Right ventricle myocardium inferior (tissue), 1 donor: ENCODE measurements at regions of chr17 and their contacts with region 1.

Region 1: GRCh38 chr17:39668199-39668966 is at the start of gene PNMT:
- DNase-seq: peak; percentile 92
- ATAC-seq: no peak
- total RNA-seq, gene PNMT: 5.1 TPM

Region 2: DNA sequence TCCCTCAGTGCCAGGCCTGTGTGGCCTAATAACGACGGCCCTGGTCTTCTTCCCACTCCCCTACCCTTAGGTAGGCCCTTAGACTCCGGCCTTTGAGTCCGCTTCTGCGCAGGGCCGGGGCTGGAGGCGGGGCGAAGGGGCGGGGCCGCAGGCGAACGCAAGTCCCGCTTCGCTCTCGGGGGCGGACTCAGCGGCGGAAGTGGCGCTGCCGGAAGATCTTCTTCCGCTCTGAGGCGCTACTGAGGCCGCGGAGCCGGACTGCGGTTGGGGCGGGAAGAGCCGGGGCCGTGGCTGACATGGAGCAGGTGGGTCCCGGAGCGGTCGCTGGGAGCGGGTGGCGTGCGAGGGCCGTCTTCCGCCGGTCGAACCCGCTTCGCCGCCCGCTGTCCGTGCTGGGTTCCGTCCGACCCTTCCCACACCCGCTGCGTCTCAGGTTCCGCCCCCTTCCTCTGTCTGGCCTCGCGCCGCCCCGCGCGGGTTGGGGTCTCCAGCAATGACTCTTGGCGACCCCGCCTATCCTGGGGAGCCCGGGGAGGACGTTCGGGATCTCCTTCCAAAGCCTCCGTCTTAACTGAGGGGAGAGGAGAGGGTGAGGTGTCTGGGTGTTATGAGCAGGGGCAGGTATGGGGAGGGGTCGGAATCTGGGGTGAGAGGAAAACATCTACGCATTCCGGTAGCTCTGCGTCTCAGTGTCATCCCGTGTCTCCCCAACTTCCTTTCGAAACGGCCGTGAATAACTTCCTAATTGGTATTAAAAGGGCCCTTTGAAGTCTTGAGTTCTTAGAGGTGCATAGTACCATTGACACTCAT is 31.3 kb before region 1 on chr17 and contains the start of gene STARD3:
- intact Hi-C with region 1: loop called (anchors 5 kb)
- DNase-seq: peak; percentile 98
- ATAC-seq: peak; percentile 96
- total RNA-seq, gene STARD3: 21.4 TPM

Region 3: GRCh38 chr17:39699818-39700147 is 31.4 kb after region 1 on chr17 and contains the start of gene ERBB2:
- intact Hi-C with region 1: loop called (anchors 5 kb)
- DNase-seq: peak; percentile 79
- ATAC-seq: peak; percentile 88
- total RNA-seq, gene ERBB2: 68.7 TPM

Region 4: GRCh38 chr17:39730095-39730921 is 61.9 kb after region 1 on chr17 and contains the start of gene MIEN1:
- intact Hi-C with region 1: loop called (anchors 5 kb)
- DNase-seq: peak; percentile 97
- ATAC-seq: peak; percentile 97
- total RNA-seq, gene MIEN1: 49.4 TPM